H1 (cell line): ENCODE measurements at regions of chr3 and their contacts with region 1.

Region 1: GRCh38 chr3:25856902-25857518 is 67.1 kb downstream of the OXSM start:
- DNase-seq: no peak
- H3K4me3 ChIP-seq: no peak overlapping the region
- H3K27ac ChIP-seq: no peak overlapping the region
- H3K4me1 ChIP-seq: peaks cover 0 to 7% (median 3%) of the 10 kb centered on the region in 4 experiments; a peak in 2 of 7 replicates
- H3K27me3 ChIP-seq: no peaks in the 10 kb centered on the region
- CTCF ChIP-seq: peak in 2 of 3 experiments; percentile 47 to 71; a peak in 2 of 4 replicates
- EP300 ChIP-seq: no peak
- POLR2A ChIP-seq: no peak
- RAD21 ChIP-seq: peak; percentile 44 to 60

Region 2: GRCh38 chr3:25631989-25632388 is 225.0 kb before region 1 on chr3:
- CTCF ChIA-PET with region 1: no interaction called
- POLR2A ChIA-PET with region 1: no interaction called
- DNase-seq: no peak
- H3K4me3 ChIP-seq: no peak overlapping the region
- H3K27ac ChIP-seq: no peak overlapping the region
- H3K4me1 ChIP-seq: no peaks in the 10 kb centered on the region; a peak in 2 of 7 replicates
- H3K27me3 ChIP-seq: no peaks in the 10 kb centered on the region
- CTCF ChIP-seq: no peak
- EP300 ChIP-seq: no peak
- POLR2A ChIP-seq: no peak
- RAD21 ChIP-seq: no peak

Region 3: GRCh38 chr3:25648107-25648535 is 208.9 kb before region 1 on chr3:
- CTCF ChIA-PET with region 1: interaction called, 65 read pairs
- POLR2A ChIA-PET with region 1: interaction called, 7 read pairs
- DNase-seq: peak; percentile 63 to 94
- H3K4me3 ChIP-seq: no peak overlapping the region
- H3K27ac ChIP-seq: no peak overlapping the region
- H3K4me1 ChIP-seq: peaks cover 0 to 6% (median 2%) of the 10 kb centered on the region in 4 experiments; a peak in 3 of 7 replicates
- H3K27me3 ChIP-seq: no peaks in the 10 kb centered on the region
- CTCF ChIP-seq: peak in 2 of 3 experiments; percentile 97 to 98; a peak in 3 of 4 replicates
- EP300 ChIP-seq: no peak
- POLR2A ChIP-seq: no peak
- RAD21 ChIP-seq: peak; percentile 96 to 99

Region 4: DNA sequence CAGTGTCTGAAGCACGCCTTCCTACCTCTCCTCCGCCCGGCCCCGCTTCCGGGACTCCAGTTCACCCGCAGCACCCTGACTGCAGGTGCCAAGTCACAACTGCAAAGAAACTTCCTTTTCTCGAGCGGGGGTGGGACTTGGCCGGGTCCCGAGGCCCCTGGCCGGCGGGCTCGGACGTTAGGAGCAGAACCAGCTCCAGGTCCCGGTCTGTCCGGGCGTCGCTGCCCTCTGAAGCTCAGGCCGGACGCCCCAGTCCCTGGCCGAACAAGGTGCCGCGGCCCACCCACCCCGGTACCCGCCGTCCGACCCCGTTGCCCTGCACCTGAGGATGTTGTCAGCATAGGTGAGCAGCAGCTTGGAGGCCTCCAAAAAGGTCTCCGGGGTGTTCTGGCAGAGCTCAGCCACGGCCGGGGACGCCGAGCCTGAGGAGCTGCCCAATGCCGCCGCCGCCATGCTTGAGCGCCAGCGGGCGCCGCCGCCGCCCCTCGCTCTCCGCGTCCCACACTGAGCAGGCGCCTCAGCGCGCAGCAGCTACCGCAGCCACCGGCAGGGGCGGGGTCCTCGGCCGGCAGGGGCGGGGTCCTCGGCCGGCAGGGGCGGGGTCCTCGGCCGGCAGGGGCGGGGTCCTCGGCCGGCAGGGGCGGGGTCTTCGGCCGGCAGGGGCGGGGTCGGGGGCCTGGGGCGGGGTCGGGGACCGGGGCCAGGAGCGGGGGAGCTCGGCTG is 73.9 kb before region 1 on chr3 and contains the start of gene NGLY1:
- CTCF ChIA-PET with region 1: interaction called, 13 read pairs
- POLR2A ChIA-PET with region 1: no interaction called
- DNase-seq: peak in 1 of 2 experiments; percentile 86
- H3K4me3 ChIP-seq: peak within 1 kb of the TSS; percentile 54 to 93 (median 74)
- H3K27ac ChIP-seq: peak within 1 kb of the TSS; percentile 59; the same call in 1 of the 2 replicates
- H3K4me1 ChIP-seq: peaks cover 0 to 5% (median 1%) of the 10 kb centered on the region in 4 experiments; a peak in 2 of 7 replicates
- H3K27me3 ChIP-seq: no peaks in the 10 kb centered on the region; a peak in 2 of 7 replicates
- CTCF ChIP-seq: no peak
- EP300 ChIP-seq: no peak
- POLR2A ChIP-seq: peak; percentile 90 to 93
- RAD21 ChIP-seq: no peak
- total RNA-seq, gene NGLY1: 21.0 and 24.8 TPM in 2 replicates

Region 5: GRCh38 chr3:25820366-25820765 is 36.6 kb before region 1 on chr3:
- CTCF ChIA-PET with region 1: interaction called, 10 read pairs
- POLR2A ChIA-PET with region 1: no interaction called
- DNase-seq: peak in 1 of 2 experiments; percentile 33
- H3K4me3 ChIP-seq: no peak overlapping the region
- H3K27ac ChIP-seq: peak overlapping the region; percentile 26; the same call in 1 of the 2 replicates
- H3K4me1 ChIP-seq: peaks cover 0 to 9% (median 4%) of the 10 kb centered on the region in 4 experiments; a peak in 4 of 7 replicates
- H3K27me3 ChIP-seq: no peaks in the 10 kb centered on the region
- CTCF ChIP-seq: no peak
- EP300 ChIP-seq: no peak
- POLR2A ChIP-seq: no peak
- RAD21 ChIP-seq: no peak

Region 6: GRCh38 chr3:25831578-25831977 is 25.4 kb before region 1 on chr3:
- CTCF ChIA-PET with region 1: interaction called, 11 read pairs
- POLR2A ChIA-PET with region 1: no interaction called
- DNase-seq: no peak
- H3K4me3 ChIP-seq: no peak overlapping the region
- H3K27ac ChIP-seq: no peak overlapping the region
- H3K4me1 ChIP-seq: peaks cover 0 to 2% (median 0%) of the 10 kb centered on the region in 4 experiments; a peak in 1 of 7 replicates
- H3K27me3 ChIP-seq: no peaks in the 10 kb centered on the region
- CTCF ChIP-seq: peak in 2 of 3 experiments; percentile 16 to 26; a peak in 2 of 4 replicates
- EP300 ChIP-seq: no peak
- POLR2A ChIP-seq: no peak
- RAD21 ChIP-seq: peak; percentile 42 to 43

Region 7: DNA sequence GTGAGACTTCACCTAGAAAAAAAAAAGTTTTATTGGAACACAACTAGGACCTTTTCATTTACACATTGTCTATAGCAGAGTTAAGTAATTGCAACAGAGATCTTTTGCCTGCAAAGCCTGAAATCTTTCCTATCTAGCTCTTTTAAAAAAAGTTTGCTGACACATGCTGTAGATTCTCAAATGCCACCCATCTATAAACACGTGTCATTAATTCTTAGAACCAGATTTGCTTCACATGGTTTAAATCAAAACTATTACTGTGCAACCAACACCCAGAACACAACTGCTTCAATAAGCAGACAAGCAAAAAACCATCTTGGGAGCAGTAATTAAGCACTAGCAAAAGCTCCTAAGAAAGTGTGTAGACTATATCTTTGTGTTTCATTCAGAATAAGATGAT is 12.1 kb before region 1 on chr3:
- CTCF ChIA-PET with region 1: interaction called, 18 read pairs
- POLR2A ChIA-PET with region 1: no interaction called
- DNase-seq: no peak
- H3K4me3 ChIP-seq: no peak overlapping the region
- H3K27ac ChIP-seq: no peak overlapping the region
- H3K4me1 ChIP-seq: no peaks in the 10 kb centered on the region
- H3K27me3 ChIP-seq: no peaks in the 10 kb centered on the region
- CTCF ChIP-seq: no peak
- EP300 ChIP-seq: no peak
- POLR2A ChIP-seq: no peak
- RAD21 ChIP-seq: no peak

Region 8: GRCh38 chr3:25897019-25897418 is 40.0 kb after region 1 on chr3:
- CTCF ChIA-PET with region 1: interaction called, 10 read pairs
- POLR2A ChIA-PET with region 1: no interaction called
- DNase-seq: peak in 1 of 2 experiments; percentile 61
- H3K4me3 ChIP-seq: no peak overlapping the region
- H3K27ac ChIP-seq: no peak overlapping the region
- H3K4me1 ChIP-seq: peaks cover 0 to 3% (median 0%) of the 10 kb centered on the region in 4 experiments; a peak in 1 of 7 replicates
- H3K27me3 ChIP-seq: no peaks in the 10 kb centered on the region
- CTCF ChIP-seq: peak; percentile 78 to 92 (median 92)
- EP300 ChIP-seq: no peak
- POLR2A ChIP-seq: no peak
- RAD21 ChIP-seq: peak; percentile 78 to 84